Activated CD4-positive, alpha-beta memory T cell treated with anti-CD3 and anti-CD28 coated beads for 36 hours (primary cell): ENCODE measurements at regions of chr6 and their contacts with region 1.

Region 1: GRCh38 chr6:90025523-90026061 is 131.3 kb downstream of the GJA10 start:
- DNase-seq: peak; percentile 77
- H3K4me3 Mint-ChIP-seq: peak overlapping the region; percentile 27
- H3K27ac Mint-ChIP-seq: peak overlapping the region; percentile 67
- H3K4me1 Mint-ChIP-seq: peaks cover 77% of the 10 kb centered on the region
- H3K27me3 Mint-ChIP-seq: no peaks in the 10 kb centered on the region

Region 2: GRCh38 chr6:89952686-89953085 is 72.9 kb before region 1 on chr6:
- CTCF ChIA-PET with region 1: no interaction called
- POLR2A ChIA-PET with region 1: no interaction called
- intact Hi-C with region 1: loop called (anchors 1 kb)
- DNase-seq: peak; percentile 72
- H3K4me3 Mint-ChIP-seq: peak overlapping the region; percentile 8
- H3K27ac Mint-ChIP-seq: peak overlapping the region; percentile 69
- H3K4me1 Mint-ChIP-seq: peaks cover 68% of the 10 kb centered on the region
- H3K27me3 Mint-ChIP-seq: no peaks in the 10 kb centered on the region

Region 3: DNA sequence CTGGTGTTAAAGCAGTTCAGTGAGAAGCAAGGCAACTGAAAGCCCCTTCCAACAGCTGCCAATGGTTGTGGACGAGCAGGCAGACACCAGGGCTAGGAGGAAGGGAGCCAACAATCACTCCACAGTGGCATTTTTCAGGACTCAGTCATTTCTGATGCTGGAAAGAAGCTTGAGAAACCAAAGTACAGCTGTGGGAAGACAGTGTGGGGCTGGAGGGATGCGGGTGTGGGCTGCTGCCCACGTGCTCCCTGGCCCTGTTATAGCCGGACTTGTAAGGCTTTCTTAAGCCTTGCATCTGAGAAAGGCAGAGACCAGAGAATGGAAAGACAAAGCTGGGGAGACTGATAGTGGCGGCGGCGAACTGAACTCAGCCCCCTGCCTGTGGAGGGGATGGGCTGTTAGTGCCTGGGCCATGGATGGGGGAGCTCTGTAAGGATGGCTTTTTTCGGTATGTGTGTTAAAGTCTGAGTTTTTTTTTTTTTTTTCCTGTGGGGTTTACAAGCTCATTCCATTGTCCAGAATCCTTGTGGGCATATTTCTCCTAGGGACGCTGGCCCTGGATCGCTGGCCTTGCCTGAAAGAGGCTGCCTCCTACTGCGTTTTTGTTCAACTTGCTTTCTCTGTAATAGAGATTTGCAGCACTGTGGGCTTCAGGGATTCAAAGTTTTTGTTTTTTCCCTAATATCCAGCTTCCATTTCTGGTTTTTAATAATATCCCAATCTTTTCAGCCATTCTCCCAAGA is 39.7 kb before region 1 on chr6:
- CTCF ChIA-PET with region 1: no interaction called
- POLR2A ChIA-PET with region 1: interaction called, 4 read pairs
- intact Hi-C with region 1: loop called (anchors 2 kb)
- DNase-seq: no peak
- H3K4me3 Mint-ChIP-seq: no peak overlapping the region
- H3K27ac Mint-ChIP-seq: peak overlapping the region; percentile 29
- H3K4me1 Mint-ChIP-seq: peaks cover 70% of the 10 kb centered on the region
- H3K27me3 Mint-ChIP-seq: no peaks in the 10 kb centered on the region

Region 4: DNA sequence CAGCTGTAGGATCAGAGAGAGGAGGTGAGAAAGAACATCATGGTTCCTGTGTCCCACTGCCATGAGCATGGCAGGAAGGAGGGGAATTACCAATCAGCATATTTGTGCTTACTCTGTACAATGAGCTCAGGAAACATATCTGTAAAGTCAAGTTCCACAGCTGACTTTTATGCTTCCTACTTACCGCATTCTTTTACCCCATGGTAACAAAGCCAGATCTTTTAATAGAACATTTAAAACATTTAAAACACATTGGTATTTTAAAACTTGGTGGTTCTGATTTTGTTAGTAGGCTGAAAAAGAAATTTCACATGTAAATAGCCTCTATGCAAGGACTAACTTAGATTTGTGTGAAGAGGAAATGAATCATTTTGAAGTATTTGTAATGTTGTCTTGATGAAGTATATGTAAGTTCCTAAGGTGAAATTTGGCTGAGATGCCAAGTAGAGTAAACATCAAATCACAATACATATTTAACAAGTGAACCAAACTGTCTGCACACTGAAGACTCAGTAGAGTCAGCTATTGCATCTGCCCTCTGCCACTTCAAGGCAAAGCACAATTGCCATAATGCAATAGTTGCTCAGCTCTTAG is 16.6 kb before region 1 on chr6:
- CTCF ChIA-PET with region 1: no interaction called
- POLR2A ChIA-PET with region 1: interaction called, 6 read pairs
- intact Hi-C with region 1: loop called (anchors 1 kb)
- DNase-seq: peak; percentile 54
- H3K4me3 Mint-ChIP-seq: peak overlapping the region; percentile 12
- H3K27ac Mint-ChIP-seq: peak overlapping the region; percentile 94
- H3K4me1 Mint-ChIP-seq: peaks cover 48% of the 10 kb centered on the region
- H3K27me3 Mint-ChIP-seq: no peaks in the 10 kb centered on the region

Region 5: GRCh38 chr6:90049295-90049694 is 23.7 kb after region 1 on chr6:
- CTCF ChIA-PET with region 1: no interaction called
- POLR2A ChIA-PET with region 1: no interaction called
- intact Hi-C with region 1: loop called (anchors 1 kb)
- DNase-seq: peak; percentile 44
- H3K4me3 Mint-ChIP-seq: peak overlapping the region; percentile 18
- H3K27ac Mint-ChIP-seq: peak overlapping the region; percentile 89
- H3K4me1 Mint-ChIP-seq: peaks cover 51% of the 10 kb centered on the region
- H3K27me3 Mint-ChIP-seq: no peaks in the 10 kb centered on the region

Region 6: DNA sequence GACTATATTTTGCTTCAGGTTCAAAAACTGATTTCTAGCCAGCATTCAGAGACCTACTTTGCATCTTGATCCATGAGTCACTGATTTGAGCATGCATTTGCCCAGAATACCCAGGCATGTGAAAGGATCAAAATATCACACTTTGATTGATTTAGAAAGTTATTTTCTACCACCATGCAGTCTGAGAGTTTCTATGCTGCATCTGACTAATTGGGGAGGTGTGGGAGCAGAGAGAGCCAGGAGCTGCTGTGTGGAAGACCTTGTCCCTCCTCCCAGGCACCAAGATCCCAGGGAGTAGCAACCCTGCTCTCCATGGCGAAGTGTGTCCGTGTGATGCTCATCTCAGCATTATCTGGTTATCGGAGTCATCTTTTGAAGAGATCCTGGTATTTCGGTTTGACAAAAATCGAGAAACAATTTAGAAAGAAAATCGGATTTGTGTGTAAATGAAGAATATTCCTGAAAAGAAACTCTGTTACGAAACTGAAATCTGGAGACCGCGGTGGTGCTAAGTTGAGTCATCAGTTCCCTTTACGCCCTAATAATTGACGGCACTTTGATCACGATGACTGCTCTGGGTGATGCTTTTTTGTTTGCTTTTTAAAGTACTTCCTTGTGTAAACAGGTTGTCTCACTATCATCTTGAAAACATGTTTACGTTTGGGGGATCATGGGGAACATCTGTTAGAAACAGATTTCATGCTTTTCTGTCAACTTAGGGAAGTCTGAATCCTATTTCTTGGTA is 77.6 kb after region 1 on chr6:
- CTCF ChIA-PET with region 1: no interaction called
- POLR2A ChIA-PET with region 1: no interaction called
- intact Hi-C with region 1: loop called (anchors 5 kb)
- DNase-seq: peak; percentile 66
- H3K4me3 Mint-ChIP-seq: peak overlapping the region; percentile 39
- H3K27ac Mint-ChIP-seq: peak overlapping the region; percentile 63
- H3K4me1 Mint-ChIP-seq: peaks cover 67% of the 10 kb centered on the region
- H3K27me3 Mint-ChIP-seq: peaks cover 5% of the 10 kb centered on the region

Region 7: GRCh38 chr6:90818163-90818562 is 792.6 kb after region 1 on chr6:
- CTCF ChIA-PET with region 1: no interaction called
- POLR2A ChIA-PET with region 1: no interaction called
- intact Hi-C with region 1: no loop called
- DNase-seq: no peak
- H3K4me3 Mint-ChIP-seq: no peak overlapping the region
- H3K27ac Mint-ChIP-seq: no peak overlapping the region
- H3K4me1 Mint-ChIP-seq: no peaks in the 10 kb centered on the region
- H3K27me3 Mint-ChIP-seq: no peaks in the 10 kb centered on the region